Activated B cell treated with CpG ODN at 0.5 μM for 24 hours (primary cell): ENCODE measurements at regions of chr7 and their contacts with region 1.

Region 1: GRCh38 chr7:112898432-112899290 is 108.5 kb upstream of the TMEM168 start:
- DNase-seq: no peak
- ATAC-seq: peak; percentile 60
- H3K4me3 Mint-ChIP-seq: no peak overlapping the region
- H3K27ac Mint-ChIP-seq: no peak overlapping the region
- H3K4me1 Mint-ChIP-seq: peaks cover 3% of the 10 kb centered on the region
- H3K27me3 Mint-ChIP-seq: no peaks in the 10 kb centered on the region
- CTCF ChIP-seq: peak; percentile 45

Region 2: DNA sequence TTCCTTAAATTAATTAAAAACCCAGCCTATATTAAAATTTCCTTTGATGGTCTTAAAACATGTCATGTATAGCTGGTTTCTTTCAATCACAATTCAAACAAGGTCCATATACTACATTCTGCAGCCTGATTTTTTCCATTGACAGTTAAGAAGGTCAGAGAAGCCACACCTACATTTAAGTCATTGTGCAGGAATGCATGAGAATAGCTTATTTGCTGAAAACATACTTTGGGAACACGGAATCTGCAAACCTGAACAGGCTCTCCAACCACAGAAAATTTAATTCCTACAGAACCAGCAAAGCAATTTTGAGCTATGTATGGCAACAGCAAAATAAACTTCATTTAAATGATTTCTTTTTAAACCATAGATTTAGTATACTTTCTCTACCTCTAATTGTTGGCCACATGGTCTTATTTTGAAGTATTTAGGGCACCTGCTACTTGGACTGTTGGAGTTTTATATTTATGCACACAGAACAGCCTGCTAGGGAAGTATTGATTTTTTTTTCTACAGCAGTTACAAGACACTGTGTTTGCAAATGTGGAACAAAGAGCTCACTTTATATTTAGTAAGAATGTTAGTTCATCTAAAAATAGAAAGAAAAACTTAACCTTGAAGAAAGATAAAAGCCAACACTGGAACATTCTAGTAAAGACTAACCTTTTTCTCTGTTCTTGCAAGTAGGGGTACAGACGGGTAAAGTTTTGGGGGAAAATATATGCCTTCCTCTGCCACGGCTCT is 1095.5 kb before region 1 on chr7:
- CTCF ChIA-PET with region 1: no interaction called
- POLR2A ChIA-PET with region 1: no interaction called
- intact Hi-C with region 1: no loop called
- DNase-seq: no peak
- ATAC-seq: no peak
- H3K4me3 Mint-ChIP-seq: no peak overlapping the region
- H3K27ac Mint-ChIP-seq: no peak overlapping the region
- H3K4me1 Mint-ChIP-seq: no peaks in the 10 kb centered on the region
- H3K27me3 Mint-ChIP-seq: no peaks in the 10 kb centered on the region
- CTCF ChIP-seq: no peak

Region 3: DNA sequence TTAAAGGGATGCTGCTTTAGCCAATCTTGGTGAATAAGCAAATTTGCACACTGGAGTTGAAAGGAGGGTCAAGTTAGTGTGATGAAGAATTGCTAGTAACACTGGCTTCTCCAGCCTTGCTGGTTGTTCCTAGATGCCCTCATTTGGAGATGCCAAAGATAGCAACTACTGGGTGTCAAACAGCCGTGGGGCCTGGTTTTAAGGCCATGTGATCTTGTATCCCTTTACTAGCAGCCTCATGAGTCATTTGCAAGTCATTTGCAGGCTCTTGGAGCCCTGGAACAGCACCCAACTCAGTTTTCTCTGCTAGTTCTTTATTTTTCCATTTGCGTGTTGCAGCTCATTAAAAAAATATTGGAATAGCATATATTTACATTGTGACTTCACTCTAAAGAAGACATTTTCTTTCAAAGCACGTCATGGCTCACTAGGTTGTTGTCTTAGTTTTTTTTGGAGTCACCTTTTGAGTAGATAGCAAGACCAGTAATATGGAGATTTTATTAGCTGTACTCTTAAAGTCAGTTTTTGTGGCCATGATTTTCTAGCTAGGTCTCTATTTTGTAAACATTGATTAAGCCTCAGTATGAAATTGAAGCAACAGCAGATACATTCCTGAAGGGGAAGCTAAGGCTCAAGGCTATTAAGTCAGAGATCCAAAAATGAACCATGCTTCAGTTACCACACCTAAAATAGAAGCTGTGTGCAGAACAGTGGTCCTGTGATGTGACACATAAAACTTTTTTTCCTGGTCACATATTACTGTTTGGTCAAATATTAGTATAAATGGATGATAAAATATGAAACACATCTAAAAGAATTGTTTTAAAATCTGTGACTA is 416.6 kb before region 1 on chr7:
- CTCF ChIA-PET with region 1: interaction called, 3 read pairs
- POLR2A ChIA-PET with region 1: no interaction called
- intact Hi-C with region 1: loop called (anchors 1 kb)
- DNase-seq: no peak
- ATAC-seq: no peak
- H3K4me3 Mint-ChIP-seq: no peak overlapping the region
- H3K27ac Mint-ChIP-seq: no peak overlapping the region
- H3K4me1 Mint-ChIP-seq: no peaks in the 10 kb centered on the region
- H3K27me3 Mint-ChIP-seq: no peaks in the 10 kb centered on the region
- CTCF ChIP-seq: no peak

Region 4: DNA sequence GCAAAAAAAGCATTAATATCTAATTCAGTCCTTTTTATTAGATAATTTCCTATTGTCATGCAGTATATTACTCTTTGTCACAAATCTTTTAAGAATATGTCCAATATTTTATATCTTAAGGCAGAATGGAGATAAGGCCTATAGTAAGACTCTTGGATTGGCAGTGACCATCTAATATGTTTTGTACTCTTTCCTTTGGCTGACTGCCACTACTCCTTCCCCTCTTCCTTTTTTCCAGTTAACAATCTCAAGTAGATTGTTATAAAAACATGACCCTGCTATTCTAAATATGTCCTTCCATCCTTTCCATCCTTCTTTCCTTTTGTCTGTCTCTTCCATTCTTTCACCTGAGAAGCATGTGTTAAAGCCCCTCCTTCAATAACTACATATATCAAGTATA is 15.7 kb before region 1 on chr7:
- CTCF ChIA-PET with region 1: no interaction called
- POLR2A ChIA-PET with region 1: no interaction called
- intact Hi-C with region 1: loop called (anchors 2 kb)
- DNase-seq: no peak
- ATAC-seq: no peak
- H3K4me3 Mint-ChIP-seq: no peak overlapping the region
- H3K27ac Mint-ChIP-seq: peak overlapping the region; percentile 5
- H3K4me1 Mint-ChIP-seq: peaks cover 38% of the 10 kb centered on the region
- H3K27me3 Mint-ChIP-seq: no peaks in the 10 kb centered on the region
- CTCF ChIP-seq: no peak

Region 5: GRCh38 chr7:113421696-113422330 is 523.2 kb after region 1 on chr7:
- CTCF ChIA-PET with region 1: interaction called, 7 read pairs
- POLR2A ChIA-PET with region 1: no interaction called
- intact Hi-C with region 1: loop called (anchors 1 kb)
- DNase-seq: peak; percentile 32
- ATAC-seq: peak; percentile 99
- H3K4me3 Mint-ChIP-seq: no peak overlapping the region
- H3K27ac Mint-ChIP-seq: no peak overlapping the region
- H3K4me1 Mint-ChIP-seq: peaks cover 3% of the 10 kb centered on the region
- H3K27me3 Mint-ChIP-seq: no peaks in the 10 kb centered on the region
- CTCF ChIP-seq: no peak

Region 6: GRCh38 chr7:113582471-113582870 is 683.8 kb after region 1 on chr7:
- CTCF ChIA-PET with region 1: no interaction called
- POLR2A ChIA-PET with region 1: no interaction called
- intact Hi-C with region 1: no loop called
- DNase-seq: no peak
- ATAC-seq: no peak
- H3K4me3 Mint-ChIP-seq: no peak overlapping the region
- H3K27ac Mint-ChIP-seq: no peak overlapping the region
- H3K4me1 Mint-ChIP-seq: no peaks in the 10 kb centered on the region
- H3K27me3 Mint-ChIP-seq: no peaks in the 10 kb centered on the region
- CTCF ChIP-seq: no peak

Region 7: DNA sequence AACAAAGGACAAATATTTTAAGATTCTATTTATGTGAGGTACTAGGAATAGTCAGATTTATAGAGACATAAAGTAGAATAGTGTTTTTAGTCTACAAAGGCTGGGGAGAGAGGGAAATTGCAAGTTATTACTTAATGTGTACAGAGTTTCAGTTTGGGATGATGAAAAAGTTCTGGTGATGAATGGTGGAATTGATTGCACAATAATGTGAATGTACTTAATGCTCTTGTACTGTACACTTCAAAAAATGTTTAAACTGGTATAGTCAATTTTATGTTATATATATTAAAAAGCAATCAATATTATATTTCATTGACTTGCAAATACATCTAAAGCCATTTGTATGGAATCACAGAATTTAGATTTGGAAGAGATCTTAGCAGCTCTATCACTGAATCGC is 806.8 kb after region 1 on chr7:
- CTCF ChIA-PET with region 1: no interaction called
- POLR2A ChIA-PET with region 1: no interaction called
- intact Hi-C with region 1: loop called (anchors 5 kb)
- DNase-seq: no peak
- ATAC-seq: no peak
- H3K4me3 Mint-ChIP-seq: no peak overlapping the region
- H3K27ac Mint-ChIP-seq: no peak overlapping the region
- H3K4me1 Mint-ChIP-seq: no peaks in the 10 kb centered on the region
- H3K27me3 Mint-ChIP-seq: no peaks in the 10 kb centered on the region
- CTCF ChIP-seq: no peak